ENCODE measurements at regions of chr9 and their contacts with region 1.

Region 1: GRCh38 chr9:92790542-92791527 is 26.2 kb upstream of the BICD2 start:
- DNase-seq: peak; percentile 77
- CTCF ChIP-seq: peak; percentile 88

Region 2: DNA sequence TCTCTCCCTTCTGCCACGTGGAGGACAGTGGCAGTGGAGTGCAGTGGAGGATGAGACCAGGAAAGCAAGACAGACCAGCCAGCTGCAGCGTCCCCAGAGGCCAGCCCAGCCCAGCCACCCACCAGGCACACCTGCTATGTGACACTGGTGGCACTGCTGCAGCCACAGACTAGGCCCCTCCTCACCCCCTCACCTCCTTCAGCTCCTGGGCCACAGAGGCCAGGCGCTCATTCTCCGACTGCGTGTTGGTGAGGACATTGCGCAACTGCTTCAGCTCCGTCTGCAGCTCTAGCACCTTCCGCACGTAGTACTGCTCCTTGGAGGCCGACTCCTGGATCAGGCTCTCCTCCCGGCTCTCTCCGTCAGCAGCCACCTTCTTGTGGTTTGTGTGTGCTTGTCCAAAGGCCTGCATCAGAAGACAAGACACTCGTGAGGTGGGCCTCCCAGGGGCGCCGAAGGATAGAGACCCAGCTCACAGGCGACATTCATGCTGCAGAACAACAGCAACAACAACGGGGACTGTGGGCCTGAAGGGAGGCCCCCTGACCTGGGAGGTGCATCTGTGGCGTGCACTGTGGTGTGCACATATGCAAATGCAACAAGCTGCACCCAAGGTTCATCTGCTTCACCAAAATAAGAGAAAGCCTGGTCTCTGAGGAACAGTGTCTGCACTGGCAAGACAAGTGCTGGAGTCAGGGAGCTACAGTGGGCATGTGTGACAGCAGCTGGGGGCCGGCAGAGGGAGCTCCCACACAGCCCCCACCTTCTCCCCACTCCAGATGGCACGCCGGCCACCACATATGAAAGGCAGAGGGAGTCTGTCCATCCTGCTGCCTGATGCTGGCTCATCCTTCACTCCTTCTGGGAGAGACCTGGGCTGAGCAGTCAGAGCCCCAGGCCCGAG is 61.8 kb before region 1 on chr9:
- CTCF ChIA-PET with region 1: interaction called, 19 read pairs
- POLR2A ChIA-PET with region 1: no interaction called
- DNase-seq: peak; percentile 75
- CTCF ChIP-seq: peak; percentile 44

Region 3: DNA sequence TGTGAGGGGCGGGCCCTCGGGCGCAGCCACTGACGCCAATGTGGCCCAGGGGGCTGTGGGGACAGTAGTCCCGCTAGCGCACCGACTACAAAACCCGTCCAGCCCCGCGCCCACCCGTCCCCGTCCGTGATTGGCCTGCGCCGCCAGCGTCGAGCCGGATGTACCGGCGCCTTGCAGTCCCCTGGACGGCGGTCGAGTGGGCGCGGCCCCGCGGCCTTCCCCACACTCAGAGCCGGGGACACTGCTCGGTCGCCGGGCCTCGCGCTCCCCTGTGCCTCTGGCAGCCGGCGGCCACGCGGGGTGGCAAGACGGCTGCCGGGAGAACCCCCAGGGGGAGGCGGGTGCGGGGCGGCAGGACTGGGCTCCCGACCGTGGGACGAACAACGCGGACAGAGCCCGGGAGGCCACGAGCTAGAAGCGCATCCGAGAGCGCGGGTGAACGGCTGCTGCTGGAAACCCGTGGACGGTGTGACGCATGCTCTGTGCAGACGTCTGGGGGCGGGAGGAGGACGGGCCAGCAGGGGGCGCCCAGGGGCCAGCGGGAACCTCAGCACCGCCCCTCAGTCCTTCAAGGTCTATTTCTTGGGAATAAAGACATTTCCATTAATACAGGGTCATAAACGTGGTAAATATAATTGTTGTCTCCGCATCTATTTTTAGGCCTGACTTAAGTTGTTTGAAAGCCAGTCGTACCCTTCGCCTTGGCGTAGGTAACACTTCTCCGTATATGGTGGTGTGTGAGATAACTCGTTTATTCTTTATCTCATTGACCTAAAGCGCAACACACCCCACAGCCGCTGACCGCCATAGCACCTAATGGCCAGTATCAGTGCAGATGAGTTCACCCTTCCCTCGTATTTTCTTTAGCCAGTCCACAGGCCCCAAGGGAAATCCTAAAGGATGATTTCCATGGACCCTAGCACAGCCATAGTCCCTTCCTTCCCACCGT is 25.6 kb before region 1 on chr9:
- CTCF ChIA-PET with region 1: interaction called, 16 read pairs
- POLR2A ChIA-PET with region 1: no interaction called
- DNase-seq: peak; percentile 99
- CTCF ChIP-seq: peak; percentile 88

Region 4: DNA sequence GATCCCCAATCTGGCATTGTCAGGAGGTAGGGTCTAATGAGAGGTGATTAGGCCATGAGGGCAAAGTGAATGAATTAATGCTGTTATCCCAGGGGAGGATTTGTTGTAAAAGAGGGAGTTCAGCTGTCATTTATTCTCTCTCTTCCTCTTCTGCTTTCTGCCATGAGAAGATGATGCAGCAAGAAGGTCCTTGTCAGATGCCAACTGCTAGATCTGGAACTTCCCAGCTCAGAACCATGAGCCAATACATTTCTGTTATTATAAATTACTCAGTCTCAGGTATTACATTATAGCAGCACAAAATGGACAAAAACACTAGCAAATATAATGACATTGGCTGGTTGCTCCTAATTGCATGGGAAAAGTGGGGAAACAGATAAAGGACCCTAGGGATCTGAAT is 10.6 kb before region 1 on chr9:
- CTCF ChIA-PET with region 1: interaction called, 10 read pairs
- POLR2A ChIA-PET with region 1: no interaction called
- DNase-seq: no peak
- CTCF ChIP-seq: no peak

Region 5: GRCh38 chr9:92808726-92809451 is 18.1 kb after region 1 on chr9:
- CTCF ChIA-PET with region 1: interaction called, 11 read pairs
- POLR2A ChIA-PET with region 1: no interaction called
- DNase-seq: peak; percentile 65
- CTCF ChIP-seq: peak; percentile 10